Activated naive CD4-positive, alpha-beta T cell treated with anti-CD3 and anti-CD28 coated beads for 36 hours (primary cell): ENCODE measurements at regions of chr5 and their contacts with region 1.

Region 1: GRCh38 chr5:138352071-138352721 is at the start of gene KDM3B:
- DNase-seq: peak; percentile 91
- H3K4me3 Mint-ChIP-seq: peak within 1 kb of the TSS; percentile 96
- H3K27ac Mint-ChIP-seq: peak within 1 kb of the TSS; percentile 94
- H3K4me1 Mint-ChIP-seq: peaks cover 37% of the 10 kb centered on the region
- H3K27me3 Mint-ChIP-seq: no peaks in the 10 kb centered on the region
- total RNA-seq, gene KDM3B: 33.4 to 36.2 TPM

Region 2: DNA sequence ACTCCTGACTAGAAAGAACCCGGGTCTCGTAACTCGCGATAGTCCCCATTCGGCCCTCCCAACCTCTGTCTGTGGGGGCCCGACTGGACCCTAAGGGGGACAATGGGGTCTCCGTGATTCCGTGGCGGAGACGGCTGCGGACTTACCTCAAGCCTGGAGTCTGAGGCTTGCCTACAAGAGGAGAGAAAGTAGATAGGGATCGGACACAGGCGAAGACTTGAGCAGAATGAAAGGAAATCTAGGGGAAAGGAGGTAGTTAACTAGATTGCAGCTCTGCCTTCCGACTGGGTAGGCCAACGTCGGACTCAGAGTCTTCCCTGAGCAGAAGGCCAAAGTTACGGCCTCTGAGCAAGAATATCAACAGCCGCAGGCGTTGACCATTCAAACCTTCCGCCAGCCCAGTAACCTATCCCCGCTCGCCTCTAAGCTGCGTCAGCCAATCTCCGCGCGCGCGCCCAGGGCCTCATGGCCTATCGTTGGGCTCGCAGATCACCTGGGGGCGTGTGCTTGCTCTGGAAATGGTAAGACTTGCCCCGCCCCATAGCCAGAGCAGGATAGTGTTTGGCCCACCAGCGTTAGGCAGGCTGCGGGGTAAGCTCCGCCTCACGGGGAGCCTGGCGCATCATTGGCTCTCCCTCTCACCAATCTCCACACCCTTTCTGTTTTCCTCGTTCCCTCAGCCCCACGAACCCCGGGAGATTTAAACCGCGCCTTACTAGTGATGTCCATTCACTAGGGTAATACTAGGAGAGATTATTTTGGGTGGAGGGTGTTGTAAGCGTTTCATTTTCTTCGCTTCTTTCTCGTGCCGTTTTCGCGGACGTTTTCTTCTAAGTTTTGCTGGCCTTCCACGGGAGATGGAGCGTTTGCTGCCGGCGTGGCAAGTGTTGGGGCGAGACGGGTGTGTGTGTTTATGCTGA is 20.5 kb before region 1 on chr5 and contains the start of gene CDC25C:
- CTCF ChIA-PET with region 1: interaction called, 176 read pairs
- intact Hi-C with region 1: loop called (anchors 1 kb)
- DNase-seq: peak; percentile 99
- H3K4me3 Mint-ChIP-seq: peak within 1 kb of the TSS; percentile 81
- H3K27ac Mint-ChIP-seq: peak within 1 kb of the TSS; percentile 83
- H3K4me1 Mint-ChIP-seq: peaks cover 9% of the 10 kb centered on the region
- H3K27me3 Mint-ChIP-seq: no peaks in the 10 kb centered on the region
- total RNA-seq, gene CDC25C: 23.2 to 26.6 TPM

Region 3: DNA sequence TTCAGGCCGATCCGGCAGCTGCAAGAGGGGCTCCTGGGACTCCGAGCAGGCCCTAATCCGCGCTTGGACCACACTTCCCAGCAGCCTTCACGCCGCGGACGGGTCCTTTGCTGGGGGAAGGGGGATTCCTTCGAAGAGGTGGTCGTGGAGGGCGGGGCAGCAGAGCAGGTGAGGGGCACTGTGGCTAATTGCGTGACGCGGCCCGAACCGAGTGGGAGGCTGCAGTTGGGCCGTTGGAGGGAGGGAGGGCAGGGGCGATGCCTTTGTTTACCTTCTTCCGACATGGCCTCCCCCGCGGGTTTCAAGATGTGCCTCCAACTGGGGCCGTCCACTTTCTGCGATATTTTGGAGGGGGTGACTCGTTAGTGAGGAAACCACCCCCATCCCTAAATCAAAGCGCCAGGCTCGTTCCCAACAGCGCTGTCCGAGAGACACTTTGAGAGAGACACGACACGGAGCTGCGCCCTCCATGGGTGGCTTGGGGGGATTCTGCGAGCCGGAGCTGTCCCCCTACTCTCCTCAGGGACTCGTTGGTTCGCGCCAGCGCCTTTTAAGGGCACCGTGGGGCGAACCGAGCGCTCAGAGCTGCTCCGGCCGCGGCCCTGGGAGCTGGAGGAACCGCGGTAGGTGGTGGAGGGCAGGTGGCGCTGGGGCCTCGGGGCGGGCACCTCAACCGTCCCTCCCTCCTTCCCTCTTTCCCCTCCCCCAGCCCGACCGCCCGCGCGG is 14.3 kb before region 1 on chr5 and contains the start of gene FAM53C:
- CTCF ChIA-PET with region 1: interaction called, 176 read pairs
- intact Hi-C with region 1: loop called (anchors 1 kb)
- DNase-seq: peak; percentile 91
- H3K4me3 Mint-ChIP-seq: peak within 1 kb of the TSS; percentile 87
- H3K27ac Mint-ChIP-seq: peak within 1 kb of the TSS; percentile 98
- H3K4me1 Mint-ChIP-seq: peaks cover 27% of the 10 kb centered on the region
- H3K27me3 Mint-ChIP-seq: no peaks in the 10 kb centered on the region
- total RNA-seq, gene FAM53C: 20.7 to 21.8 TPM

Region 4: GRCh38 chr5:138364576-138364975 is 12.4 kb after region 1 on chr5:
- CTCF ChIA-PET with region 1: interaction called, 63 read pairs
- intact Hi-C with region 1: no loop called
- DNase-seq: no peak
- H3K4me3 Mint-ChIP-seq: no peak overlapping the region
- H3K27ac Mint-ChIP-seq: no peak overlapping the region
- H3K4me1 Mint-ChIP-seq: peaks cover 53% of the 10 kb centered on the region
- H3K27me3 Mint-ChIP-seq: no peaks in the 10 kb centered on the region

Region 5: DNA sequence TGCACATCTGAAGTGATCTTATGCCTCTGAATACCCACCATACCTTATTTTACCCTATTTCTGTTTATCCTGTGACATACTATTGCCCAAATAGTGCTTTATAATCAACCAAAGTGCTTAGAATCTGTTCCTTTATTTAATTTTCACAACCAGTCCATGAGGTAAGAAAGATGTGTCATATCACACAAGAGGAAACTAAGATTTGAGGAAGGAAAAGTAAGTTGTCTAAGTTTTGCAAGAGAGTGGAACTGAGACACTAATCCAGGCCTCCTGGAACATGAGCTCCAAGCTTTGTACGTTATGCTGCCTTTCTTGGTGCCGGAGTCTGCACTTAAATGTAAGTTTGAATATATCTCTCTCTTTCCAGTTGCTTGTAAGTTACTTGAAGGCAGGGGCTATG is 17.5 kb after region 1 on chr5:
- CTCF ChIA-PET with region 1: interaction called, 63 read pairs
- intact Hi-C with region 1: no loop called
- DNase-seq: no peak
- H3K4me3 Mint-ChIP-seq: no peak overlapping the region
- H3K27ac Mint-ChIP-seq: peak overlapping the region; percentile 26
- H3K4me1 Mint-ChIP-seq: peaks cover 44% of the 10 kb centered on the region
- H3K27me3 Mint-ChIP-seq: no peaks in the 10 kb centered on the region

Region 6: GRCh38 chr5:138408023-138408422 is 55.8 kb after region 1 on chr5:
- CTCF ChIA-PET with region 1: interaction called, 6 read pairs
- intact Hi-C with region 1: loop called (anchors 2 kb)
- DNase-seq: peak; percentile 73
- H3K4me3 Mint-ChIP-seq: no peak overlapping the region
- H3K27ac Mint-ChIP-seq: peak overlapping the region; percentile 74
- H3K4me1 Mint-ChIP-seq: peaks cover 11% of the 10 kb centered on the region
- H3K27me3 Mint-ChIP-seq: no peaks in the 10 kb centered on the region

Region 7: DNA sequence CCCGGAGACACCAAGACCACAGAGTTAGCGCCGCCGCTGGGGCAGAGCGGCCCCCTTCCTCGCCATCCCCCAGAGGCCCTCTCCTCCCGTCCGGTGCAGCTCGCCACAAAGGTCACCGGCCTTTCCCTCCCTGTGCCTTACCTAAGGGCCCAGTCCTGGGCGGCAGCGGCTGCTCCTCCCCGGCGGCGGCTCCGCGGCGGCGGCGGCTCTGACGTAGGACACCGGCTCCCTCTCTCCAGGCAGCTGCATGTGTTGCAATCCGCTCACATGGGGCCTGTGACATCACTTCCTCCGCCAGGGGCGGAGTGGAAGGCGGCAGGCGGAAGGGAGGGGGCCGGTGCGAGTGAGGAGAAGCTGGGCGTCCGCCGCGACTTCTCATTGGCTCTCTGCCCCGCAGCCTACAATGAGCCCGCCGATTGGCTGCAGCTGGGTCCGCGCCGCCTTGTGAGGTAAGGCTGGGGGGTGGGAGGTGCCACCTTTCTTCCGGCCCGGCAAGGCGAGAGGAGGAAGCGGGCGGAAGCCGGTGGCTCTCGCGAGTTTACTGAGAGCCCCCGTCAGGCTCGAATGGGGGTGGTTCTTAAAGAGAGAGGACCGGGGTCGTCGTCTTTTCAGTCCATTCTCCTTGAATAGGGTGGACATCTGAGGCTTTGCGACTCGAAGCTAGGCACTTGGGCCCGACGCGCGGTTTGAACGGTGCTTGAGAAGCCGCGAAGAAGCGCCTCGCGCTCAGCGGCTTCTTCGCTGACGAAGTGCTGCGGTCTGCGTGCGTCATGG is 190.9 kb after region 1 on chr5 and contains the start of gene ETF1:
- CTCF ChIA-PET with region 1: interaction called, 5 read pairs
- intact Hi-C with region 1: loop called (anchors 1 kb)
- DNase-seq: peak; percentile 100
- H3K4me3 Mint-ChIP-seq: peak within 1 kb of the TSS; percentile 100
- H3K27ac Mint-ChIP-seq: peak within 1 kb of the TSS; percentile 100
- H3K4me1 Mint-ChIP-seq: peaks cover 71% of the 10 kb centered on the region
- H3K27me3 Mint-ChIP-seq: no peaks in the 10 kb centered on the region
- total RNA-seq, gene ETF1: 99.8 to 107 TPM